ENCODE measurements at regions of chr14 and their contacts with region 1.

Region 1: GRCh38 chr14:44438936-44439335 is 68.1 kb downstream of the FSCB start:
- DNase-seq: no peak
- ATAC-seq: no peak

Region 2: GRCh38 chr14:44448951-44449358 is 10.0 kb after region 1 on chr14:
- intact Hi-C with region 1: loop called in 1 of 2 experiments (anchors 1 kb)
- DNase-seq: no peak
- ATAC-seq: no peak